GM13977 (cell line): ENCODE measurements at regions of chr3 and their contacts with region 1.

Region 1: GRCh38 chr3:121979734-121980449 is 42.2 kb downstream of the ILDR1 start:
- DNase-seq: no peak
- CTCF ChIP-seq: no peak

Region 2: GRCh38 chr3:121894301-121894990 is 85.4 kb before region 1 on chr3 and contains the start of gene SLC15A2:
- in situ Hi-C with region 1: loop called (anchors 10 kb)
- DNase-seq: no peak
- CTCF ChIP-seq: no peak